ENCODE measurements at regions of chr21 and their contacts with region 1.

Region 1: DNA sequence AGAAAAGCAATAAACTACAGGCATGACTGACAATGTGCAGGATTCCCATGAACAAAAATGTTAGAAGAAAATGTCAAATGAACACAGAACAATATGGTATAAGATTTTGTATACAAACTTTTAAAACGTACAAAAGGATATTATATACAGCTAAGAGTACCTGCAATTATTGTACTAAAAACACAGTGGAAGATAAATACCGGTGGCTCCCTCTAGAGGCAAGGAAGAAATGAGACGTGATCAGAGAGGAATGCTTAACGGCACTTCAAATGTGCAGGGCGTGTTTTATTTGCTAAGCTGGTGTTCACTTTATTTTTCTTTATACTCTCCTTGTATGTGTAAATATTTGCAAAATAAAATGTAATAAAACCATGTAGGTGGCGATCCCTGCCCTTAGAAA is 191.8 kb upstream of the SAMSN1 start:
- DNase-seq: peak; percentile 53
- ATAC-seq: peak; percentile 68
- H3K4me3 Mint-ChIP-seq: no peak overlapping the region
- H3K27ac Mint-ChIP-seq: no peak overlapping the region
- H3K4me1 Mint-ChIP-seq: peaks cover 31% of the 10 kb centered on the region
- H3K27me3 Mint-ChIP-seq: no peaks in the 10 kb centered on the region

Region 2: DNA sequence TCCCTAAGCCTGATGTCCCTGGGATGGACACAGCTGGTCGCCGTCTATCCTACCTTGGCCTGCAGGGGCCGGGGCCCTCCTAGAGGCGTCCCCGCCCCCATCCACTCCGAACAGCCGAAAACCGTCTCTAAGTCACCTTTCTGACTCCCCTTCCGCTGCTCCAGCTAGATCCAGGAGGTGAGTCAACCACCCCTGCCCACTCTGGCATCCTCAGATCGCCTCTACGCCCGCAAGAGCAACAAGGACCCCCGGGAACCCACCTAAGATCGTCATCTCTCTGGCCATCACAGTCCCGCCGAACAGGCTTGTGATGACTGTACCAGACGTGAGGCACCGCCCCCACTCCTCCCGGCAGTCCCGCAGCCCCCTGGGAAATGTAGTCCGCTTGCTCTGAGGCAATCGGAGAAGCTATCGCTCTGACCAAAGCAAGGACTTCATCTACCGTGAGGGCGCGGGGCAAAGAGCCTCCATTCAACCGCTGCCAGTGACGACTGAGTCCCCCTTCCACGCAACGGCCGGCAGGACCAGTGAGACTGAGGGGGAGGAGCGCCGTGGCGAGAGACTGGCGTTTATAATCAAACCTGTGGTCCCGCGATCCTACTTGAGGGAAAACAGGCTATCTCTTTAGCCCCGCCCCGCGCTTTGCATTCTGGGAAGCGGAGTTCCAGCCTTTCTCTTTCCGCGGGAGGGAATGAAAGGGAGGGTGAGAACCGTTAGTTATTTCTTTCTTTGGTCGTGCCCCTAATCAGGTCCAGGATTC is 354.9 kb before region 1 on chr21 and contains the start of gene HSPA13:
- CTCF ChIA-PET with region 1: interaction called, 4 read pairs
- POLR2A ChIA-PET with region 1: no interaction called
- intact Hi-C with region 1: loop called in 1 of 2 experiments (anchors 5 kb)
- DNase-seq: peak; percentile 99
- ATAC-seq: peak; percentile 97
- H3K4me3 Mint-ChIP-seq: peak within 1 kb of the TSS; percentile 90
- H3K27ac Mint-ChIP-seq: peak within 1 kb of the TSS; percentile 98
- H3K4me1 Mint-ChIP-seq: peaks cover 29% of the 10 kb centered on the region
- H3K27me3 Mint-ChIP-seq: no peaks in the 10 kb centered on the region
- total RNA-seq, gene HSPA13: 29.5 to 50.2 TPM

Region 3: DNA sequence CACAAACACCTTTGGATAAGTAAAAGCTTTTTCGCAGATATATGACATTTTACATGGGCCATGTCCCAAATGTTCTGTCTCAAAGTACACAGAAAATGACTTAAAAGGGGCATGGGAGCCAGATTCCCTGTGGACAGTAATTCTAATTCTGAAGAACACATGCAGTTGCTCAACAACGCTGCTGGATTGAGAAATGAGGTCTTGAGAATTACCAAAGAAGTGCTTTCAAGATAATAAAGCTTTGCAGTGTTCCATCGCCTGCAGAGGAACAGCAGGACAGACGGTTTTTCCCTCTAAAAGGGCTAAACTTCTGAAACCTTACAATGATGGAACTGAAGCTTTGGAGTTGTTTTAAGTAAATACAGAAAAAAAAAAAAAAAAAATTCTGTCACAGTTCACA is 299.7 kb before region 1 on chr21:
- CTCF ChIA-PET with region 1: interaction called, 10 read pairs
- POLR2A ChIA-PET with region 1: no interaction called
- intact Hi-C with region 1: loop called in 1 of 2 experiments (anchors 10 kb)
- DNase-seq: no peak
- ATAC-seq: no peak
- H3K4me3 Mint-ChIP-seq: no peak overlapping the region
- H3K27ac Mint-ChIP-seq: no peak overlapping the region
- H3K4me1 Mint-ChIP-seq: no peaks in the 10 kb centered on the region
- H3K27me3 Mint-ChIP-seq: no peaks in the 10 kb centered on the region

Region 4: DNA sequence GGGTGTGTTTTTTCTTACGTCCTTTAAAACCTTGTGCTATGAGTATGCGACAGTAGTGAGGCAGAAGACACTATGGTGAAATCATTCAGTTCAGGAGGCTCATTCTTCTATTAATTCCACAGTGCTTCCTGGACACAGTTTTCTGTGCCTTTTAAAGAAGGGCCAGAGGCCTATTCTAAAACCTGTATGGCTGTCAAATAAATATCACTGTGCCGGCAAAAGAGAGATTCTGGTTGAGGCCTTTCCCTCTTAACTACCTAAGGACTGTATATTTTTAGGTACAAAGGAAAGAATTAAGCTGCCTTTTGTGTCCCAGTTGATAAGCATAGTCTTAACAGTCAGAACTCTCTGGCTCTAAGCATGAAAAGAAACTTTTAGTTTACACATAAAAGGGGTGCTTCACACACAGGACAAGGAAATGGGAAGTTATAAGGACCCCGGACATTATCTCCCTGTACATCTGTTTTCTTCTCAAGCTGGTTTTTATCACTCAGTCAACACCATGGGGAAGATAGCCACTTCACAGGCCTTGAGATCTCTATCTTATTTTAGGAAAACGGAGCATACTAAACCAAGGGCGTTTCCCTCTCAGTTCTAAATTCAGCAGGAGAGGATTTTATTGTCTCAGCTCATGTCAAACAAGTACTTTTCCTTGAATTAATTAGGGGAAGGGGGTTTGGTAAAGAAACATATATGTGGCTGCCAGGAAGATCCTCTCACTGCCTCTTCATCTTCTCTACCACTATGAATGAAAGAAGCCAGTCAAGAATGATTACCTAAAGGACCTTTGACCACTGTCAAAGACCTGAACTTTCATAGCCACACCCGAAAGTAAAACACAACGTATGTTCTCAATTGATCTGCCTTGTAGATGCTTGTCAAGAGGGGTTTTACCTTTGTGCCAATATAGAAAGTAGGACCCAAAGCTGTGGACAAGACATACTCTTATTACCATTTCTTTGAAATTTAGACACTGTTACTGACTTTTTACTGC is 283.6 kb before region 1 on chr21:
- CTCF ChIA-PET with region 1: interaction called, 4 read pairs
- POLR2A ChIA-PET with region 1: no interaction called
- intact Hi-C with region 1: loop called (anchors 2 to 10 kb)
- DNase-seq: no peak
- ATAC-seq: peak; percentile 25
- H3K4me3 Mint-ChIP-seq: no peak overlapping the region
- H3K27ac Mint-ChIP-seq: peak overlapping the region; percentile 77
- H3K4me1 Mint-ChIP-seq: peaks cover 40% of the 10 kb centered on the region
- H3K27me3 Mint-ChIP-seq: no peaks in the 10 kb centered on the region

Region 5: GRCh38 chr21:14533504-14534428 is 204.2 kb before region 1 on chr21:
- CTCF ChIA-PET with region 1: interaction called, 5 read pairs
- POLR2A ChIA-PET with region 1: no interaction called
- intact Hi-C with region 1: loop called (anchors 5 kb)
- DNase-seq: peak; percentile 21
- ATAC-seq: peak; percentile 78
- H3K4me3 Mint-ChIP-seq: peak overlapping the region; percentile 83
- H3K27ac Mint-ChIP-seq: peak overlapping the region; percentile 100
- H3K4me1 Mint-ChIP-seq: peaks cover 80% of the 10 kb centered on the region
- H3K27me3 Mint-ChIP-seq: no peaks in the 10 kb centered on the region

Region 6: DNA sequence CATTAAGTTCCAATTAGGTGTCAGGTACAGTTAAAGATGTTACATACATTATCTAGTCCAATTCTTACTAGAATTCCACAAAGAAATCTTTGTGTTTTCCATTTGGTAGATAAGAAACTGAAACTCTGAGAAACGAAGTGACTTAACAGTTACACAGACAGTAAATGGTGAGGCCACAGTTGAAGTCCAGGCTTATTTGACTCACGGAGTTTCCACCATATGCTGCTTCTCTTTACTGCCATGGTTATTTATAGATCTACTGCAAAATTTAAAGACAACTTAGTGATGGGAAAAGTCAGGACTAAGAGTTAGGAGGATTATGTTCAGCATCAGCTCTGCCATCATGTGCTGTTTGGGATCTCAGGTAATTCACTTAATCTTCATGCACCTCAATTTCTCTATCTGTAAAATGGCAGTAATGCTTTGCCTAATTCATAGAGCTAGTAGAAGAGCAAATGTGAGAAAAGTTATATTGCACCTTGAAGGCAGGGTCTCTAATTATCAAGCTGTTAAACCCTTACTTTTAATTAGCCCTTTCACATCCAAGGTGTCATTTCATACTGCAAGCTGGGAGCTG is 165.6 kb before region 1 on chr21:
- CTCF ChIA-PET with region 1: no interaction called
- POLR2A ChIA-PET with region 1: no interaction called
- intact Hi-C with region 1: no loop called
- DNase-seq: peak; percentile 17
- ATAC-seq: peak; percentile 36
- H3K4me3 Mint-ChIP-seq: no peak overlapping the region
- H3K27ac Mint-ChIP-seq: no peak overlapping the region
- H3K4me1 Mint-ChIP-seq: peaks cover 14% of the 10 kb centered on the region
- H3K27me3 Mint-ChIP-seq: no peaks in the 10 kb centered on the region

Region 7: DNA sequence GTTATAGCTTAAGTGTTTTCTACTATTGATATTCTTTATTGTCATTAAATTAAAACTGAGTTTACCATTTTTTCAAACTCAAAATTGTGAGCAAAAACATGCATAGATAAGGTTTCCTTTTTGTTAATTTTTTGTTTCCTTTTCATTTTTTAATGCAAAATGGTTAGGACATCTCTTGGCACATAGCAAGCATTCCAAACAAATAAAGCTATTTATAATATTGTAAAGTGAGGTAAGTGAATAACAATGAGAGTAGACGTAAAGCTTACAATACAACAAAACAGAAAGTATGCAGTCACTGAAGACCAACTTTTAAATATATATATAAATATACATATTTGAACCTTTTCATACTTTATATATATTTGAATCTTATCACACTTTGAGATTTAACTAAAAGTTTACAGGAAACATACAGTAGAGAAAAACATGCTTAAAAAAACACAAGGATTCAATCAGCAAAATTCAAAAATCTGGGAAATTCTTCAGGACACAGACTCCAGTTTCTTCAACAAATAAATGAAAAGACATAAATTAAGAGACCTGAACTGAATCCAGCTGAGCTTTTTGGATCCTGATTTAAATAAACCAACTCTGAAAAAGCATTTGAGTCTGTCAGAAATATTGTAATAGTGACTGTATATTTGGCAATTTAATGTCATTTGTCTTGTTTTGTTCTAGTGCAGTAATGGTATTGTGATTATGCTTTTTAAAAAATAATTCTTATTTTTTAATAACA is 124.3 kb before region 1 on chr21:
- CTCF ChIA-PET with region 1: no interaction called
- POLR2A ChIA-PET with region 1: no interaction called
- intact Hi-C with region 1: no loop called
- DNase-seq: no peak
- ATAC-seq: no peak
- H3K4me3 Mint-ChIP-seq: no peak overlapping the region
- H3K27ac Mint-ChIP-seq: no peak overlapping the region
- H3K4me1 Mint-ChIP-seq: peaks cover 19% of the 10 kb centered on the region
- H3K27me3 Mint-ChIP-seq: no peaks in the 10 kb centered on the region

Region 8: GRCh38 chr21:14675774-14676530 is 62.0 kb before region 1 on chr21:
- CTCF ChIA-PET with region 1: no interaction called
- POLR2A ChIA-PET with region 1: no interaction called
- intact Hi-C with region 1: loop called in 1 of 2 experiments (anchors 2 kb)
- DNase-seq: peak; percentile 9
- ATAC-seq: peak; percentile 82
- H3K4me3 Mint-ChIP-seq: peak overlapping the region; percentile 48
- H3K27ac Mint-ChIP-seq: peak overlapping the region; percentile 92
- H3K4me1 Mint-ChIP-seq: peaks cover 27% of the 10 kb centered on the region
- H3K27me3 Mint-ChIP-seq: no peaks in the 10 kb centered on the region